ENCODE measurements at regions of chr17 and their contacts with region 1.

Region 1: DNA sequence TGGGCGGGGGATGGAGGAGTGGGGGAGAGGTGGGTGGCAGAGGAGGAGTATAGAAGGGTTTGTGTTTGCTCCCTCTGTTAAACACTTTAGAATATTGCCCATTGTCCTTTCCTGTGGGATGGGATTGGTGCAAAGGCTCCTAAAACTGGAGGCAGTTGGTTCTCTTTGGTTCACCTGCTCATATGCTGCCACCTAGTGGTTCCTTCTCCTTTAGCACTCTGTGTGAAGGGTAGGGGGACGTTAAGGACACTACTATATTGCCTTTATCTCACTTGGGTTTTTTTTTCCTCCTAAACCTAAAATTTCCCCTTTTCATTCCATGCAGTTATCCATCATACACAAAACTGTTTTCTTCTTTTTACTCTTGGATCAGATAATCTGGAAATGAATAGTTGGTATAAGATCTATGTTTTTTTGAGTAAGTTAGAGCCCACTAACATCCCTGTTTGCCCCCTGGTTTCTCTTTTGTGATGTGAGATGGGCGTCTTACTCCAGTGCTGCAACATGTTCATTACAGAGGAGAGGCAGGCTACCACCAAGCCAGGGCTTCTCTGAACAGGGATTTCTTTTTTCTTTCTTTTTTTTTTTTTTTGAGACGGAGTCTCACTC is 23.8 kb downstream of the SNX11 start:
- DNase-seq: peak; percentile 70 to 81 (median 74)
- ATAC-seq: peak; percentile 96
- H3K4me3 ChIP-seq: no peak overlapping the region
- H3K27ac ChIP-seq: no peak overlapping the region
- H3K4me1 ChIP-seq: no peaks in the 10 kb centered on the region
- H3K27me3 ChIP-seq: no peaks in the 10 kb centered on the region; a peak in 1 of 5 replicates
- CTCF ChIP-seq: peak; percentile 80 to 92 (median 83)
- EP300 ChIP-seq: no peak
- POLR2A ChIP-seq: no peak
- RAD21 ChIP-seq: peak; percentile 69 to 90

Region 2: GRCh38 chr17:47862621-47863440 is 268.5 kb before region 1 on chr17:
- CTCF ChIA-PET with region 1: no interaction called
- POLR2A ChIA-PET with region 1: no interaction called
- in situ Hi-C with region 1: no loop called
- intact Hi-C with region 1: no loop called
- DNase-seq: no peak
- ATAC-seq: no peak
- H3K4me3 ChIP-seq: no peak overlapping the region
- H3K27ac ChIP-seq: no peak overlapping the region
- H3K4me1 ChIP-seq: peaks cover 30 to 35% of the 10 kb centered on the region in 2 experiments
- H3K27me3 ChIP-seq: no peaks in the 10 kb centered on the region
- CTCF ChIP-seq: no peak
- EP300 ChIP-seq: no peak
- POLR2A ChIP-seq: no peak
- RAD21 ChIP-seq: no peak

Region 3: DNA sequence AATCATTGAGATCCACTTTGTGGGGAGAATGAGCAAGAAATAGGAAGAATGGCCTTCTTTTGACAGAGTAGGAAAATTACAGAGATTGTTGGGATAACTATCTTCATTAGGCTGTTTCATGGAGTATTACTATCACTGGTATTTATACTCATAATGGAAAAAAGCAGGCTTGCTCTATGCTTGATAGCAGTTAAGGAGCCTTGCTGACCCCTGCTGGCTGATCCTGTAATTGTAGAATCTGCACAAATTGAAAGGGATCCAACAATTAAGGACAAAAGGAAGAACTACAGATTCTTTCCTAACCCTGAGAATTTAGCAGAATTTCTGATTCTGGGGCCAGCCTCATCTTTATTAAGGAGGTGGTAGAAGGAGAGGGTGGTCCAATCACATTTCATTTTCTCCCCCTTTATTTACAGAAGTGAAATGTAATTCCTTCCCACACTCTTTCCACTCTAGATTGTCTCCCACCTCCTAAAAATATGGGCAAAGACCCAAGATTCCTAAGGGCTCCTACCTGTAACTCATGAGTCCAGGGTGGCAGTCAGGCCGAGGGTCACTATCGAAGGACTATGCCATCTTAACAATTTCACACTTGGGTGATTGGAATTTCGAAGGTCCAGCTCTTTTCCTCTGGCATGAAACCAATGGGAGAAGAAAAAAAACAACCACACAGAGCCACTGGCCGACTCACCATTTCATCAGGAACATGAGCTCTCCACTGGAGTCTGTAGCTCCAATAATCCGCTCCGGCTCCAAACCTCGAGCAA is 56.8 kb before region 1 on chr17:
- CTCF ChIA-PET with region 1: interaction called, 9 read pairs
- POLR2A ChIA-PET with region 1: no interaction called
- in situ Hi-C with region 1: loop called (anchors 5 kb)
- intact Hi-C with region 1: no loop called
- DNase-seq: peak; percentile 53 to 79 (median 61)
- ATAC-seq: peak; percentile 92
- H3K4me3 ChIP-seq: no peak overlapping the region
- H3K27ac ChIP-seq: no peak overlapping the region
- H3K4me1 ChIP-seq: no peaks in the 10 kb centered on the region
- H3K27me3 ChIP-seq: no peaks in the 10 kb centered on the region
- CTCF ChIP-seq: peak; percentile 75 to 95 (median 80)
- EP300 ChIP-seq: no peak
- POLR2A ChIP-seq: no peak
- RAD21 ChIP-seq: peak; percentile 90 to 97

Region 4: DNA sequence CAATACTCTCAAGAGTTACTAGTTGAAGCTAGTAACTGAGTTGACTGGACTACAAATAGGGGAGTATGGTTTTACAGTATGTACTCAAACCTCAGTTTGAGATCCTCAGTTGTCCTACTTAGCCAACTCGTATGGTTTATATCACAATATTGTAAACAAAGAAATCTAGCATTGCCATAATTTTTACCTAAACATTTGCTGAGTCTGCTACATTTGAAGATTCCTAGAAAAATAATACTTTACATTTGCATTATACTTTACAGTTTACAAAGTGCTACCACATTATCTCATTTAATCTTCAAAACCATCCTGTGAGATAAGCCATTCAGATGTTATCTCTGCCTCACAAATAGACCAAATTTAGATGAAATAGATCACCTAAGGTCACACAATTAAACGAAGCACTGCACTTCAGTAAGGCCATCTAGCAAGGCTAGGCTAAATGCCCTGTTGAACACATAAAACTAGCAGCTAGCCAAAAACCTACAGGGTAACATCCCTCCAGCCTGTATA is 46.3 kb before region 1 on chr17:
- CTCF ChIA-PET with region 1: interaction called, 9 read pairs
- POLR2A ChIA-PET with region 1: interaction called, 4 read pairs
- in situ Hi-C with region 1: no loop called
- intact Hi-C with region 1: loop called (anchors 1 kb)
- DNase-seq: no peak
- ATAC-seq: no peak
- H3K4me3 ChIP-seq: no peak overlapping the region
- H3K27ac ChIP-seq: no peak overlapping the region
- H3K4me1 ChIP-seq: no peaks in the 10 kb centered on the region
- H3K27me3 ChIP-seq: no peaks in the 10 kb centered on the region
- CTCF ChIP-seq: no peak
- EP300 ChIP-seq: no peak
- POLR2A ChIP-seq: no peak
- RAD21 ChIP-seq: no peak